ENCODE measurements at regions of chr5 and their contacts with region 1.

Region 1: GRCh38 chr5:14281746-14282181 is 138.6 kb downstream of the TRIO start:
- DNase-seq: no peak
- H3K4me3 ChIP-seq: no peak overlapping the region
- CTCF ChIP-seq: no peak

Region 2: GRCh38 chr5:13994621-13995253 is 287.0 kb before region 1 on chr5:
- in situ Hi-C with region 1: loop called (anchors 5 kb)
- DNase-seq: no peak
- H3K4me3 ChIP-seq: no peak overlapping the region
- CTCF ChIP-seq: no peak

Region 3: GRCh38 chr5:14696057-14696456 is 414.3 kb after region 1 on chr5:
- in situ Hi-C with region 1: no loop called
- DNase-seq: no peak
- H3K4me3 ChIP-seq: no peak overlapping the region
- CTCF ChIP-seq: no peak

Measured in astrocyte of the cerebellum (primary cell).